ENCODE measurements at regions of chr2 and their contacts with region 1.

Region 1: GRCh38 chr2:192087398-192087958 is 107.3 kb downstream of the TMEFF2 start:
- DNase-seq: no peak
- H3K4me3 ChIP-seq: no peak overlapping the region
- H3K27ac ChIP-seq: no peak overlapping the region
- H3K4me1 ChIP-seq: no peaks in the 10 kb centered on the region
- H3K27me3 ChIP-seq: no peaks in the 10 kb centered on the region
- CTCF ChIP-seq: no peak
- POLR2A ChIP-seq: no peak

Region 2: GRCh38 chr2:192073878-192074277 is 13.6 kb before region 1 on chr2:
- CTCF ChIA-PET with region 1: interaction called, 10 read pairs
- POLR2A ChIA-PET with region 1: no interaction called
- dilution Hi-C with region 1: no loop called
- intact Hi-C with region 1: no loop called
- DNase-seq: no peak
- H3K4me3 ChIP-seq: no peak overlapping the region
- H3K27ac ChIP-seq: no peak overlapping the region
- H3K4me1 ChIP-seq: no peaks in the 10 kb centered on the region
- H3K27me3 ChIP-seq: no peaks in the 10 kb centered on the region
- CTCF ChIP-seq: no peak
- POLR2A ChIP-seq: no peak